ENCODE measurements at regions of chr18 and their contacts with region 1.

Region 1: DNA sequence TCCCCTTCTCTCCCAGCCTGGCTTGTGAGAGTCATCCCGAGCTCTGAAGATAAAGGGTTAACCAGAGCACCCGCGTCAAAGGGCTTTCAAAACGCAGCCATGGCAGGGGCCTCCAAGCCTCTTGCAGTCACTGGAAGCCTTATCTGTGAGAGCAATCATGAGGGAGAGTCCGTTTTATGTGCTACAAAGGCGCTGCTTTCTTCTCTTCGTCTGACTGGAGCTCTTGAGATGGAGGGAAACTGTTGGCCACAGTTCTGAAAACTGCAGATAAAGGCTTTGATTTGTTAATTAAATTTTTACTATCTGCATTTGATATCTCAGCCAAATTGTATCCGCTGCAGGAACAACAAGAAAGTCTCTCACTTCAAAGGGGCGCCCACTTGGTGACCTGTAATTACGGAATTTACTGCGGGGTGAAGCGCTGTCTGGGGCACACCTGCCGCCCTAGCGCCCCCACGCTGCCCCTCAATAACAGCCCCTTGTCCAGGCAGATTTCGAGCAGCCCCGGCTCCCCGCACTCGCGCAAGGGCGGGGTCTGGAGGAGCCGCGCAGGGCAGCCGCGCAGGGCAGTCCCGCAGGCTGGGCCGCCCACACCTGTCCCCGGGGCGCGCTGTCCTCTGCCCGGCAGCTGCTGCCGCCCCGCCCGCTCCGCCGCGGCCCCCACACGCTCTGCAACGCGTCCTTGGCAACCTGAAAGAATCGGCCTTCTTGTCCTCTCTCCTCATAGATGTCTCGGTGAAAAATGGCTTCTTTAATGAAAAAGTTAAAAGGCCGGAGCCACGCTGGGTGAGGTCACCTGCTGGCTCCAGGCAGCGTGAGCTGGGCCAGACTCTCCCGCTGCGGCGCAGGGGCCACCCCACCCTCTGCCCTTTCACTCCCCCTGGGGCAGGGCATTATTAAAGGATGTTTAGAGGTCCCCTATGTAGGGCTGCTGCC is 217.9 kb downstream of the VAPA start:
- DNase-seq: peak in 1 of 2 donors; percentile 48
- ATAC-seq: peak; percentile 69 to 89 (median 85)
- H3K4me3 ChIP-seq: peak overlapping the region; percentile 62
- H3K27ac ChIP-seq: no peak overlapping the region
- H3K4me1 ChIP-seq: peaks cover 15% of the 10 kb centered on the region
- H3K27me3 ChIP-seq: no peaks in the 10 kb centered on the region
- CTCF ChIP-seq: no peak

Region 2: GRCh38 chr18:10081492-10081891 is 50.2 kb before region 1 on chr18:
- intact Hi-C with region 1: loop called in 1 of 2 experiments (anchors 10 kb)
- DNase-seq: no peak
- ATAC-seq: peak in 3 of 4 donors; percentile 27 to 65 (median 33)
- H3K4me3 ChIP-seq: no peak overlapping the region
- H3K27ac ChIP-seq: no peak overlapping the region
- H3K4me1 ChIP-seq: no peaks in the 10 kb centered on the region
- H3K27me3 ChIP-seq: no peaks in the 10 kb centered on the region
- CTCF ChIP-seq: no peak

Region 3: DNA sequence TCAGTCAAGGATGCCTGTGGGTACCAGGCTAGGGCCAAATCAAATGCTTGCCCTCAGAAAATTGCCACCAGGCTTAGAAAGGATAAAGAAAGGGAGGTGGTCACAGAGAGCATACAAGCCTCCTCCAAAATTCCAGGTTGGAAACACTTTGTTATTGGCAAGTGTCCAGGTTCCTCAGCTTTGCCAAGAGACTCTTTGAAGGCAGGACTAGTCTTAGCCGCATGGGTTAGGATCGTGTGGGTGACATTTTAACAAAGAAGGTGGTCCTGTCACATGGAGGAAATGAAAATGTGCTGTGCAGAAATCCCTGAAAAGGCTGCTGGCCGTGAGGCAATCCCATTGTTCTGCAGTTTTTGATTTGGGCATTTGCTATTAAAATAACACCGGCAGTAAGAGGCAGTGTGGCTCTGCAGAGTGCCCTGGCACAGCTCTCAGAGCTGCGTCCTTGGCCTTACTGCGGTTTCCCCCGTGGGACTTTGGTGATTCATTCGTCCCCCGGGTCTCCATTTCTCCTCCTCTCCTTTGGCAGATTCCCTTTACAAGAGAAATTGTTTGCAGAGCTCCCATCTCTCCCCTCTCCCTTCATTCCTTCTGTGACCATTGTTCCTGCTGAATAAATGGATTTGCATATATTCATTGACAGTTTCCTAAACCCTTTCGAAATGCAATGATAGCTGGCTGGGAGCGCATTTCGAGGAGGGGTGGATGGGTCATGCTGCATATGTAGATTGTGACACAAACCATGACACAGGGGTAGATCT is 30.6 kb before region 1 on chr18:
- intact Hi-C with region 1: no loop called
- DNase-seq: peak; percentile 30 to 64
- ATAC-seq: peak; percentile 44 to 79 (median 70)
- H3K4me3 ChIP-seq: no peak overlapping the region
- H3K27ac ChIP-seq: no peak overlapping the region
- H3K4me1 ChIP-seq: peaks cover 7% of the 10 kb centered on the region
- H3K27me3 ChIP-seq: no peaks in the 10 kb centered on the region
- CTCF ChIP-seq: no peak